Posterior cingulate gyrus (tissue), 11 donors: ENCODE measurements at regions of chr17 and their contacts with region 1.

Region 1: DNA sequence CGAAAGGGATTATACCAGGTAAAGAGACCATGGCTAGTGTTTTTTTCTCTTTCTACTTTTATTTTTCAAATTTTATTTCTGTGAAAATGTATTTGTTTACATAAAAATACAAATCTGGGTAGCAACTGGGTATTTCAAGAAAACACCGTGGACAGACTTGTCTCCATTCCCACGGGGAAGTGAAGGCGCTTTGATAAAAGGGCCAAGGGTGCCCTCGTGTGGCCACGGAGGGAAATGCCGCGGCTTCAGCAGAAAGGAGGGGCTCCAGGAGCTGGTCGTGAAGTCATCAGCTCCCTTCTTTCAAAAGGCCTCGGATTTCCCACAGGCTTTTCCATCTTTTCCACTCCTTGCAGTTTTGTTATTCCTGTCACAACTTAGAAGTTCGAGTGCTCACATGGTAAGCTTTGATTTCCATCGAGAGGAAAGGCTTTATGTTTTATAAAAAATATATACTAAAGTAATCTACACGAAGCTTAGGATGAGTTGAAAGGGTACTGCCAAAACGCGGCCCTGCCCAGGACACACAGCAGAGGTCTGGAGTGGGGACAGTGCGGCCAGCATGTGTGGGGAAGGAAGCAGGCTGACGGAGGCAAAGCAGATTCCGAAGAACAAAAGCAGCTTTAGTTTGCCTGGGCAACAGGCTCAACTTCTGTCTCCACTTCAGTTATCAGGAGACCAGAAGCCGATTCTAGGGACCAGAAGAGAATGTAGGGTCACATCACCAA is 15.3 kb upstream of the MNT start:
- DNase-seq: peak; percentile 81 to 99 (median 96)

Region 2: GRCh38 chr17:2347547-2348307 is 68.4 kb before region 1 on chr17:
- intact Hi-C with region 1: no loop called
- DNase-seq: peak in 4 of 10 donors; percentile 18 to 85 (median 58)

Region 3: DNA sequence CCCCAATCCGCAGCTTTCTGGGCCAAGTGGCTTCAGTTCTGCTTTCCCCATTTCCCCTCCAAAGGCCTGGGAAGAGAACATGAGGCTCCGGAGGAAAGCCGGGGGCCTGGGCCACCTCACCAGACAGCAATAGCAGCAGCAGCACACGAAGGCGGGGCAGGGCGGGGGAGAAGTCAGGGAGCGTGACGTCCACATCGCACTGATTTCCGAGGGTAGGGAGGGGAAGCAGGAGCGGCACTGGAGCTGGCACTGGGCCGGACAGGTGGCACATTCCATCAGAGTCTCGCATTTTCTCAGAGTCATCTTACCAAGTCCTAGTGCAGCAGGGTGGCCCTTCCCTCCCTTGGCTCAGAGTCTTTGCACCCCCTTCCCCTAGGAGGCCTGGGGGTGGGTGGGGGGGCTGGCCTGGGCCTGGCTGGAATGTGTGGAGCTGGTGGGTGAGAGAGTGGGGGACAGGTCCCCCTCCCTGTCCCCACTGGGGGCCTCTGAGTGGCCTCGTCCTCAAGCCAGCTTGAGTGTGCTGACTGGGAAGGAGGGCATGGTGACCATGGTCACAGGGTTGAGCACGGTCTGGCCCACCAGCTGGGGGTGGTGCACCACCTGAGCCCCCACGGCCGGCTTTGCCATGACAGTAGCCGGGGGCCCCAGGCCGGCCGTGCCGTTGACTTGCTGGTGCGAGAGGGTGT is 29.6 kb before region 1 on chr17:
- intact Hi-C with region 1: loop called (anchors 1 kb)
- DNase-seq: peak in 1 of 10 donors; percentile 84